CD4-positive, alpha-beta T cell (primary cell): ENCODE measurements at regions of chr1 and their contacts with region 1.

Region 1: GRCh38 chr1:6872573-6873261 is 87.5 kb downstream of the CAMTA1 start:
- DNase-seq: no peak
- ATAC-seq: no peak
- H3K4me3 ChIP-seq: no peak overlapping the region
- H3K4me3 Mint-ChIP-seq: no peak overlapping the region
- H3K27ac ChIP-seq: no peak overlapping the region
- H3K27ac Mint-ChIP-seq: no peak overlapping the region
- H3K4me1 ChIP-seq: no peaks in the 10 kb centered on the region
- H3K4me1 Mint-ChIP-seq: peaks cover 31% of the 10 kb centered on the region
- H3K27me3 ChIP-seq: no peaks in the 10 kb centered on the region
- H3K27me3 Mint-ChIP-seq: no peaks in the 10 kb centered on the region
- CTCF ChIP-seq: no peak

Region 2: DNA sequence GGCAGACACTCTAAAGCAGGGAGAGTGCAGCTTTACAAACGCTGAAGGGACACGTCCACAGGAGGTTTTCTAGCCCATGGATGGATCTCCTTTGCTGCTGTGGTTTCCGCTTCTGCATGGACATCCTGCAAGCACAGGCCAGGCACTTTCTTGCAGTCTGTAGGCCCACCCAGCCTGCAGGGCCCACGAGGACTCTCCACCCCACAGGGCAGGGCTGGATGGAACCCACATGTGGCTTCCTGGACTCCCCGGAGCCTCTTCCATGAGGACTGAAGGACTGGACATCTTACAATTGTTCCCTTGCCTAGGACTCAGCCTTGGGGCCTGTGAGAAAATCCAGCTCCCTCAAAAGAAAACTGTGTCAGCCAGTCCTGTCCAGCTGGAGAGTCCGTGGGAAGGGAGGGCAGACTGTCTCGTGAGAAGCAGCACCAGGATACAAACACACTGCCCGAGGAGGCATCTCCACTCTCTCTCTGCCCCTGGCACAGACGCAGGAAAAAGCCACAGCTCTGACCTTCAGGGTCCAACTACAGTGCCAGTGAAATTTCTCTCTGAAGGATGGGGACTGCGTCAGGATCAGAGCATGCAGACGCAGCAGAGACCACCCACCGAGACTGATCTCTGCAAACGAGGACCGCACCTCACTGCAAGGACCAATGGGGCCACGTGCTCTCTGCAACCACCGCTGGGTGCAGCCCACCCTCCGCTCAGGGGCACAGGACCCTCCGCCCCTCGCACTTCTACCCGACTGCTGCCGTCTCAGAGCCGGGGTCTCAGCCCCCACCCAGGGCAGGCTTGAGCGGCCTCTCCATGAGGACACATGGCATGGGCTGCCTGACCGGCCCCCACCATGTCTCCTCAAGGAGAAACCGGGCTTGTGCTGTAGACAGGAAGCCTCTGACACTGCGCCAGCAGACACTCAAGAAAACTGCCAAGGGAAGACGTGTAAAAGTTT is 1010.6 kb before region 1 on chr1:
- CTCF ChIA-PET with region 1: no interaction called
- POLR2A ChIA-PET with region 1: no interaction called
- intact Hi-C with region 1: no loop called
- DNase-seq: no peak
- ATAC-seq: no peak
- H3K4me3 ChIP-seq: no peak overlapping the region
- H3K4me3 Mint-ChIP-seq: no peak overlapping the region
- H3K27ac ChIP-seq: no peak overlapping the region
- H3K27ac Mint-ChIP-seq: no peak overlapping the region
- H3K4me1 ChIP-seq: no peaks in the 10 kb centered on the region
- H3K4me1 Mint-ChIP-seq: no peaks in the 10 kb centered on the region
- H3K27me3 ChIP-seq: no peaks in the 10 kb centered on the region
- H3K27me3 Mint-ChIP-seq: no peaks in the 10 kb centered on the region
- CTCF ChIP-seq: no peak

Region 3: GRCh38 chr1:6848816-6849215 is 23.9 kb before region 1 on chr1:
- CTCF ChIA-PET with region 1: interaction called, 3 read pairs
- POLR2A ChIA-PET with region 1: no interaction called
- intact Hi-C with region 1: loop called in 1 of 2 experiments (anchors 1 kb)
- DNase-seq: no peak
- ATAC-seq: no peak
- H3K4me3 ChIP-seq: no peak overlapping the region
- H3K4me3 Mint-ChIP-seq: no peak overlapping the region
- H3K27ac ChIP-seq: no peak overlapping the region
- H3K27ac Mint-ChIP-seq: no peak overlapping the region
- H3K4me1 ChIP-seq: no peaks in the 10 kb centered on the region
- H3K4me1 Mint-ChIP-seq: peaks cover 4% of the 10 kb centered on the region
- H3K27me3 ChIP-seq: no peaks in the 10 kb centered on the region
- H3K27me3 Mint-ChIP-seq: no peaks in the 10 kb centered on the region
- CTCF ChIP-seq: no peak